GM12878 (cell line): ENCODE measurements at regions of chr17 and their contacts with region 1.

Region 1: DNA sequence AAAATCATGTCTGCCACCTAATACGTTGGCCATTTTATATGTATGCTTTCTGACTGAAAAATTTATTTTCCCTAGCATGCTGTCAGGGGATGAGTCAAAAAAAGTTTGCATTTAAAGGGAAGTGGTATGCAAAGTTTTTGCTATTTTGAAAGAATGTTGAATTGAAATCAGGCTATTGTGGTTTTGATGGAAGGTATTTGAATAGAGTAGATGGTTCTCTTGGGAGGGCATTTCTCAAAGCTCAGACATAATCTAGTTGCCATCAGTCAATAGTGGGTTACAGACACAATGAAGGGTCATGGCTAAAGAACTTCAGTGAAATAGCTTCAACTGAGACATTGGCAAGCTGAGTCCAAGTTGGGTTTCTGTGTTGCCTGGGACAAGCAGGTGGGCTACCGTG is 102.4 kb downstream of the MAP2K6 start:
- DNase-seq: peak; percentile 77
- ATAC-seq: peak; percentile 94
- H3K4me3 ChIP-seq: peak overlapping the region; percentile 37
- H3K27ac ChIP-seq: peak overlapping the region; percentile 96
- H3K4me1 ChIP-seq: peaks cover 17% of the 10 kb centered on the region
- H3K27me3 ChIP-seq: no peaks in the 10 kb centered on the region
- CTCF ChIP-seq: no peak
- EP300 ChIP-seq: peak; percentile 20 to 31; a peak in 1 of 4 replicates
- POLR2A ChIP-seq: peak; percentile 41; the same call in 1 of the 2 replicates
- RAD21 ChIP-seq: no peak

Region 2: DNA sequence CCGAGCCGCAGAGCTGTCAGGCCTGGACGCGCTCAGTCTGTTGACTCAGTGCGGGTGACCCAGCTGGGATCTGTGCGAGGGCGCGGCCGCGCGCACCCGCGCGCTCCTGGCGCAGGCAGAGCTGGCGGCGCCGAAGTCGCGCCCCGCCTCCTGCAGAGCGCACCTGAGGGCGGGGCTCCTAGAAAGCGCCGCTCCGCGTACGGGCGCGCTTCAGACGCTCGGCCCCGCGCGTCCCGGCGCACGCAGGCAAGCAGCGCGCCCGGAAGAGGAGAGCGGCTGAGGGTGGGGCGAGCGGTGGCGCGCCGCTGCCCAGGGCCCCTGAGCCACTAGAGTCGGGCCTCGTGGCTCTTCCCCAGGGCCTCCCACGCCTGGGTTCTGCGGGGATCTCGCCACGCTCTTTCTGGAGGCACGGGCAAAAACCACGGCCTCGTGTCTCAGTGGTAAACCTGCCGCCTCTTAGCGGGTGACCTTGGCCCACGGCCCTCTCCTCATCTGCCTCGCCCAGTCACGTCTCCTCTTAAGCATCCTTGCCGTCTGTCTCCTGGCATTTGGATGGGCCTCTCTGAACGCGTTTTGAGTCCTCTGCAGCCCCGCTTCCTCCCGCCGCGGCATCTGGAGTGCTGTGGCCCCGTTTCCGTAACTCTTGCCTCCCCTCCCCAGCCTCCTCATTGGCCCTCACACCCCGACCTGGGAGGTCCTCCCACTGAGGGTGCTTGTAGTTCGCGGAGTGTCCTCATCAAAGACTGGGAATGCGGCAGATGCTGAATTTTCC is 189.7 kb before region 1 on chr17 and contains the start of gene ABCA5:
- CTCF ChIA-PET with region 1: interaction called, 71 read pairs
- POLR2A ChIA-PET with region 1: interaction called, 4 read pairs
- RAD21 ChIA-PET with region 1: no interaction called
- SMC1A ChIA-PET with region 1: no interaction called
- in situ Hi-C with region 1: loop called (anchors 5 kb)
- intact Hi-C with region 1: no loop called
- DNase-seq: peak; percentile 69
- ATAC-seq: peak; percentile 96
- H3K4me3 ChIP-seq: peak within 1 kb of the TSS; percentile 76
- H3K27ac ChIP-seq: peak within 1 kb of the TSS; percentile 85
- H3K4me1 ChIP-seq: no peaks in the 10 kb centered on the region
- H3K27me3 ChIP-seq: no peaks in the 10 kb centered on the region
- CTCF ChIP-seq: no peak
- EP300 ChIP-seq: no peak
- POLR2A ChIP-seq: peak; percentile 98
- RAD21 ChIP-seq: no peak
- polyA plus RNA-seq, gene ABCA5: 11.8 to 31.1 TPM

Region 3: GRCh38 chr17:69414408-69415274 is 102.3 kb before region 1 on chr17 and contains the start of gene MAP2K6:
- CTCF ChIA-PET with region 1: interaction called, 11 read pairs
- POLR2A ChIA-PET with region 1: interaction called, 4 read pairs
- RAD21 ChIA-PET with region 1: interaction called, 8 read pairs
- SMC1A ChIA-PET with region 1: interaction called, 9 read pairs
- in situ Hi-C with region 1: no loop called
- intact Hi-C with region 1: loop called (anchors 2 kb)
- DNase-seq: peak; percentile 60
- ATAC-seq: peak; percentile 97
- H3K4me3 ChIP-seq: peak within 1 kb of the TSS; percentile 69
- H3K27ac ChIP-seq: peak within 1 kb of the TSS; percentile 45
- H3K4me1 ChIP-seq: no peaks in the 10 kb centered on the region
- H3K27me3 ChIP-seq: no peaks in the 10 kb centered on the region
- CTCF ChIP-seq: no peak
- EP300 ChIP-seq: peak in 1 of 2 experiments; percentile 62; a peak in 1 of 4 replicates
- POLR2A ChIP-seq: peak; percentile 62
- RAD21 ChIP-seq: no peak
- polyA plus RNA-seq, gene MAP2K6: 61.4 to 70.3 TPM

Region 4: DNA sequence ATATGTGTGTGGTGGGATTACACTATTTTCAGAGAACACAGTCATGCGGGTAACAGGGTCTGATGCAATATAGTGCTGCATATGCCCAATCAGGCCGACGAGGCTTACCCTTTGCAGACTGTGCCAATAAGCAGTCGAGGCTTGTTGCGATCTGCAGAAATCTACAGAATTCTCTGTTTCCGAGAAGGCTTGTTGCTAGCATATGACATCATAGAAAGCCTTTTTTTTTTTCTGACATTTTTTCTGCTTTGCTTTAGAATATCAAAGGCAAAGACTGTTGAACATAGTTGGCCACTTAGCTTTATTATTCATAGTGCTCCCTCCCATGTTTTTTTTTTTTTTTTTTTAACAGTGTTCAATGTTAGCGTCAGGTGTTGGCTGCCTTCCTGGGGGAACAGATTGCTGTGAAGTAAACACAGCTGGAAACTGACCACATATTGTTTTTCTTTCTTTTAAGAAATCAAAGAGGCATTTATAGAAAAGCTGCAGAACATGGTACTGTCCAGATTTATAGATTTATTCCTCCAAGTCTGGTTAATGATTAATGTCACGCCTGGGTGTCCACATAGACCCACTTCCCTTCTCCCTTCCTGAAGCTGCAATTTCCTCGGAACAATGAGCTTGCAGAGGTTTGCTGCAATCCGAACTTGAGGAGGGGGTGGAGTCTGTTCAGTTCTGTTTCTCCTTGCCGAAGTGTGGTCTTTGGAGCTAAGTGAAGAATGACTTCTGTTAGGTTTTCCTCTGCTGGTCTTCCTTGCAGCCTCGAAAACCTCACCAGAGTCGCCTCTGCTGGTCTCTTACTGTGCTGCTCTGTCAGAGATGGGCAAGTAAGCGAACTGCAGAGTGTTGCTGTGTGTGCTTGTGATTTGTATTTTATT is 15.1 kb before region 1 on chr17:
- CTCF ChIA-PET with region 1: interaction called, 100 read pairs
- POLR2A ChIA-PET with region 1: interaction called, 5 read pairs
- RAD21 ChIA-PET with region 1: interaction called, 14 read pairs
- SMC1A ChIA-PET with region 1: interaction called, 56 read pairs
- in situ Hi-C with region 1: no loop called
- intact Hi-C with region 1: loop called (anchors 1 kb)
- DNase-seq: no peak
- ATAC-seq: peak; percentile 54
- H3K4me3 ChIP-seq: peak overlapping the region; percentile 70
- H3K27ac ChIP-seq: peak overlapping the region; percentile 88
- H3K4me1 ChIP-seq: peaks cover 25% of the 10 kb centered on the region
- H3K27me3 ChIP-seq: no peaks in the 10 kb centered on the region
- CTCF ChIP-seq: 0 out of 6 replicates have a peak, but pooled peaks of 1 of the 3 experiments have one; percentile 8
- EP300 ChIP-seq: 0 out of 4 replicates have a peak, but pooled peaks of 1 of the 2 experiments have one; percentile 18
- POLR2A ChIP-seq: no peak
- RAD21 ChIP-seq: no peak